ENCODE measurements at regions of chr13 and their contacts with region 1.

Region 1: GRCh38 chr13:60267498-60268198 is 103.9 kb upstream of the DIAPH3 start:
- DNase-seq: peak in 6 of 9 donors; percentile 5 to 26 (median 14)
- ATAC-seq: peak; percentile 58
- H3K4me3 ChIP-seq: peak overlapping the region; percentile 79
- H3K4me3 Mint-ChIP-seq: no peak overlapping the region
- H3K27ac ChIP-seq: peak overlapping the region; percentile 49
- H3K27ac Mint-ChIP-seq: no peak overlapping the region
- H3K4me1 ChIP-seq: no peaks in the 10 kb centered on the region
- H3K4me1 Mint-ChIP-seq: peaks cover 0 to 3% (median 0%) of the 10 kb centered on the region in 7 donors
- H3K27me3 ChIP-seq: no peaks in the 10 kb centered on the region
- H3K27me3 Mint-ChIP-seq: peaks cover 5 to 13% (median 11%) of the 10 kb centered on the region in 5 donors

Region 2: DNA sequence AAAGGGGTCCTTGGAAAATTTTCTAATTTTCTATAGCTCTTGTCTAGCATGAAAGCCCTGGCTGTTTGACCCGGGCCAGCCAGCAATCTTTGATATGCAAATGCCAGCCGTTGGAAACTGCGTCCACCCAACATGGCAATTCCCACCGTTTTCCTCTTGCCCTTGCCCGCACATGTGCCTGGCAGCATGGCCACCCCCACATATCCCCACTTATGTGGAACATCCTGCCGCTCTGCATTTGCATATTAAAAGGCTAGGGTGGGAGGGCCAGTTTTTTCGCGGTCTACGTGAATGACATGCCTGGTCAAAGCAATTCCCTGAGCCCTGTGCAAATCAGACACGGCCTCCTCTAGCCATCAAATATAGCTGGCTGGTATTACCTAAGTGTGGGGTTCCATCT is 19.1 kb after region 1 on chr13:
- CTCF ChIA-PET with region 1: no interaction called
- POLR2A ChIA-PET with region 1: no interaction called
- intact Hi-C with region 1: loop called in 1 of 2 experiments (anchors 1 kb)
- DNase-seq: no peak
- ATAC-seq: no peak
- H3K4me3 ChIP-seq: no peak overlapping the region
- H3K4me3 Mint-ChIP-seq: no peak overlapping the region
- H3K27ac ChIP-seq: no peak overlapping the region
- H3K27ac Mint-ChIP-seq: no peak overlapping the region
- H3K4me1 ChIP-seq: no peaks in the 10 kb centered on the region
- H3K4me1 Mint-ChIP-seq: no peaks in the 10 kb centered on the region
- H3K27me3 ChIP-seq: no peaks in the 10 kb centered on the region
- H3K27me3 Mint-ChIP-seq: peaks cover 0 to 13% (median 5%) of the 10 kb centered on the region in 5 donors

Region 3: DNA sequence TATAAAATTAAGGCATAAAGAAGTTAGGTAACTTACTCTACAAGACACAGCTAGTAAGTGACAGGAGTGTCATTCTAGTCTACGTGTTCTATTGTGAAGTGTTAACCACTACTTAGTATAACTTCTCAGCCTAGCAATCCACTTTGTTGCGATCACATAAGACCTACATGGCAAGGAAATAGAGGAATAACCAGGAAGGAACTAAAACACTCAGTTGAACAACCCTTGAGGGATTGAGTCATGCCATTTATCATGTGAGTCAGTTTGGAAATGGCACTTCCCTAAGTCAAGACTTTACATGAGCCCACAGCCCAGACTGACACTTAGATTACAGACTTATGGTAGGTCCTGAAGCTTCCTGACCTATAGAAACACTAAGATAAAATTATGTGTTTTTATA is 1427.5 kb after region 1 on chr13:
- CTCF ChIA-PET with region 1: no interaction called
- POLR2A ChIA-PET with region 1: no interaction called
- intact Hi-C with region 1: no loop called
- DNase-seq: no peak
- ATAC-seq: no peak
- H3K4me3 ChIP-seq: no peak overlapping the region
- H3K4me3 Mint-ChIP-seq: no peak overlapping the region
- H3K27ac ChIP-seq: no peak overlapping the region
- H3K27ac Mint-ChIP-seq: no peak overlapping the region
- H3K4me1 ChIP-seq: no peaks in the 10 kb centered on the region
- H3K4me1 Mint-ChIP-seq: no peaks in the 10 kb centered on the region
- H3K27me3 ChIP-seq: no peaks in the 10 kb centered on the region
- H3K27me3 Mint-ChIP-seq: no peaks in the 10 kb centered on the region